ENCODE measurements at regions of chr20 and their contacts with region 1.

Region 1: GRCh38 chr20:45392733-45393132 is 14.6 kb upstream of the TP53TG5 start:
- DNase-seq: no peak
- H3K4me3 ChIP-seq: no peak overlapping the region
- H3K27ac ChIP-seq: no peak overlapping the region
- H3K4me1 ChIP-seq: no peaks in the 10 kb centered on the region
- H3K27me3 ChIP-seq: no peaks in the 10 kb centered on the region
- CTCF ChIP-seq: no peak; the same call in 1 of the 2 replicates

Region 2: DNA sequence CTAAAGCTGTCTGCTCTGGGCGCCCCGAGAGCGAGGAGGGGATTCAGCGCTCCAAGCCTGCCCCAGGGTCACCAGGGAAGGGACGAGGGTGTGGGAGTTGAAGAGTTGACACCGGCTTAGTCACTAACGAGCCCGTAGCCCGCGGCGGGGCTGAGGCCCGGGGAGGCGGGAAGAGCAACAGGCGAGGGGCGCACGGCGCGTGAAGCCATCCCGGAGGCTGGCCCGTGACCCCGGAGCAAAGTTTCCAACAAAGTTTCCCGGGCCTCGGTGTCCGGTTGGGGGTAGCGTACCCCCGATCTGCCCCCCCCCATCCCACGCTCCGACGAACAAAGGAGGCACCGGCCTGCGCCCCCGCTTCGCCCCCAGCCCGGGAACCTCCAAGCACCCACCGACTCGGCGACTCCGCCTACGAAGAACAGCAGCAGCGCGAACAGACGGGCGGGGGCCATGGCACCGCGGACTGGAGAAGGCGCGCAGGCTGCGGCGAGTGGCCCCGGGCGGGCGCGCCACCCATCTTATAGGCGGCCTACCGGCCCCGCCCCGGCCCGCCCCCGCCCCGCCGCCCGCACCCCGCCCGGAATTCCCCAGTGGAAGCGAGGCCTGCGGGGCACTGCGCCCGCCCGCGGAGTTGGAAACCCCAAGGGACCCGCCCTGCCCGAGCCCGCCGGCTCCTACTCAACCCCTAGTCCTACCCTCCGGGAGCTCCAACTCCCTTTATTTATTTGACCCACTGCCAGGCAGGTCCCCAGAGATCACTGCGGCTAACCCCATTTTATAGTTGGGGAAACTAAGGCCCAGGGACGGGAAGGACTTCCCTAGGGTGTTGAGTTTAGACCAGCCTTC is 44.6 kb before region 1 on chr20 and contains the start of gene SDC4:
- CTCF ChIA-PET with region 1: interaction called, 10 read pairs
- POLR2A ChIA-PET with region 1: interaction called, 3 read pairs
- intact Hi-C with region 1: no loop called
- DNase-seq: peak; percentile 63 to 80
- H3K4me3 ChIP-seq: peak within 1 kb of the TSS; percentile 76
- H3K27ac ChIP-seq: peak within 1 kb of the TSS; percentile 92
- H3K4me1 ChIP-seq: peaks cover 44% of the 10 kb centered on the region
- H3K27me3 ChIP-seq: no peaks in the 10 kb centered on the region
- CTCF ChIP-seq: 0 out of 2 replicates have a peak, but pooled peaks have one; percentile 21
- total RNA-seq, gene SDC4: 114 and 117 TPM in 2 replicates

Region 3: DNA sequence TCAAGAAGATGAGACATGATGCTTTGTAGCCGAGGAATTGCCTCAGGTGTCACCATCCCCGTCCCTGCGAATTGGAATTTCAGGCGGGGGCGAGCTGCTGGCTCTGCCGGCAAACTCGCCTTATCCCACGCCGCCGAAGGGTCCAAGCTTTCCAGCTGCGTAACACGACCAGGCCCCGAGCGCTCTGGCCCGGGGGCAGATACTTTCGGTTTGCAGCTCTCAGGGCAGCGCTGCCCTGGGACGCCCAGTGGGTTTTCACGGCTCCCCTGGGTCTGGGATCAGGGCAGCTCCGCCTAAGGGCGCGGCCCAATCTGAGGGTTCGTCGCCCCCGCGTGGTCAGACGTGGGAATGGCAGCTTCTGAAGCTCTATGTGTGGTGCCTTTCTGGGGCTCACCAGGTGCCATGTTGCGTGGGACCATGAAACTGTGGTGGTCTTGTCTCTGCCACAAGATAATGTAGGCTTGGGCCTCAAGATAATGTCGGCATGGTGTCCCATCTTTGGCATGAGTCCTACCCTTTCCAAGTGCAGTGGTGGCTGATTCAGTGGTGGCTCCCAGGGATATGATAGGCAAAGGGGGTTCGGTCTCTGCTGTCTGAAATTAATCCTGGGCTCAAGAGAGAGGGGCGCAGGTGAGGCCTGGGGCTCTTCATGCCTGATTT is 44.1 kb after region 1 on chr20:
- CTCF ChIA-PET with region 1: interaction called, 10 read pairs
- POLR2A ChIA-PET with region 1: no interaction called
- intact Hi-C with region 1: no loop called
- DNase-seq: peak; percentile 70 to 89
- H3K4me3 ChIP-seq: peak overlapping the region; percentile 78
- H3K27ac ChIP-seq: no peak overlapping the region
- H3K4me1 ChIP-seq: peaks cover 14% of the 10 kb centered on the region
- H3K27me3 ChIP-seq: no peaks in the 10 kb centered on the region
- CTCF ChIP-seq: peak; percentile 98